ENCODE measurements at regions of chr6 and their contacts with region 1.

Region 1: DNA sequence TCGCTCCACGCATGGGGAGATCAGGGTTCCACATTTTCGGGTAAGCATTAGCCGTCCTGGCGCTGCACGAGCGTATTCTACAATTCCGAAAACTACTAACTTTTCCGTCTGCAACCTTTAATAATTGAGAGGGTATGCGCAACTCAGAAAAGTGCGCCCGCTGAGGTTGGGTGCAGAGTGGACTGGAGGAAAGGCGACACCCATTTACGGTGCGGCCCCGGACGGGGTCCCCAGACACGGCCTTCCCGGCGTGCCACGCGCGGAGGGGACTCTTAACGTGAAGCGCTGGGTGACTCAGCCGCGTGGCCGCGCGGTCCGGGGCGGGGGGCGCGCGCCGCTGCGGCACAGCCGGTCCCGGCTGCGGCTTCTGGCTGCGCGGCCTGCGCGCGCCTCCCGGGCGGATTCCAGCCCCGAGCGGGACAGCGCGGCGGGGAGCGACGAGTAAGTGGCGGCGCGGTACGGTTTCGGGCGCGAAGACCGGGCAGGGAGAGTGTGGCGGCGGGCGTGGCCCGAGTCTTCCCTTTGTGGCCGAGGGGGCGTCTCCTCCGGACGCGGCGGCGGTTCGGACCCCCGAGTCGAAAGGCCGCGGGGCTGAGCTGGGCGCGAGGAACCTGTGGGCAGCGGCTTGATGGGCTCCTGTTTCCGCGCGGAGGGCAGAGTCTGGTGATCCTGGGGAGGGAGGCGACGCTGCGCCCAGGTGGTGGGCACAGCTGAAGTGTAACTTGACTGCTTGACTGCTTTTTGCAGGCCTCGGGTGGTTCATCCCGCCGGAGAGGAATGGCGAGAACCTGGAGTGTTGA is at the starts of genes KCTD20 and PXT1:
- DNase-seq: peak; percentile 86 to 89
- H3K4me3 ChIP-seq: peak within 1 kb of the TSS; percentile 43 to 96 (median 86)
- H3K27ac ChIP-seq: peak within 1 kb of the TSS; percentile 78 to 99 (median 99)
- H3K4me1 ChIP-seq: peaks cover 24 to 36% of the 10 kb centered on the region in 2 donors
- H3K27me3 ChIP-seq: no peaks in the 10 kb centered on the region
- CTCF ChIP-seq: peak in 1 of 6 experiments; percentile 8
- POLR2A ChIP-seq: peak in 1 of 2 donors; percentile 88
- total RNA-seq, gene KCTD20: 32.4 to 55.3 (median 37.2) TPM
- total RNA-seq, gene PXT1: not detected

Region 2: GRCh38 chr6:36594029-36594815 is 151.4 kb after region 1 on chr6 and contains the start of gene SRSF3:
- intact Hi-C with region 1: loop called (anchors 10 kb)
- DNase-seq: peak; percentile 97 to 98
- H3K4me3 ChIP-seq: peak within 1 kb of the TSS; percentile 57 to 71 (median 58)
- H3K27ac ChIP-seq: peak within 1 kb of the TSS; percentile 98 to 100 (median 99)
- H3K4me1 ChIP-seq: peaks cover 35 to 38% of the 10 kb centered on the region in 2 donors
- H3K27me3 ChIP-seq: no peaks in the 10 kb centered on the region
- CTCF ChIP-seq: peak in 4 of 6 experiments; percentile 43 to 55 (median 50)
- POLR2A ChIP-seq: peak; percentile 96 to 99
- total RNA-seq, gene SRSF3: 120 to 287 (median 144) TPM

Measured in thyroid gland (tissue), 4 donors.